Stomach (tissue), 19 donors: ENCODE measurements at regions of chr13 and their contacts with region 1.

Region 1: GRCh38 chr13:77779552-77780272 is 82.2 kb downstream of the SLAIN1 start:
- DNase-seq: peak; percentile 41 to 88
- H3K4me3 ChIP-seq: no peak overlapping the region
- H3K27ac ChIP-seq: peak overlapping the region in 1 of 5 donors; percentile 41
- H3K4me1 ChIP-seq: peaks cover 0 to 11% (median 5%) of the 10 kb centered on the region in 4 donors
- H3K27me3 ChIP-seq: no peaks in the 10 kb centered on the region
- CTCF ChIP-seq: peak in 5 of 7 experiments; percentile 23 to 67 (median 44)
- EP300 ChIP-seq: no peak
- POLR2A ChIP-seq: no peak

Region 2: GRCh38 chr13:77599351-77599750 is 180.4 kb before region 1 on chr13:
- intact Hi-C with region 1: no loop called
- DNase-seq: peak in 1 of 2 donors; percentile 12
- H3K4me3 ChIP-seq: no peak overlapping the region
- H3K27ac ChIP-seq: no peak overlapping the region
- H3K4me1 ChIP-seq: no peaks in the 10 kb centered on the region
- H3K27me3 ChIP-seq: no peaks in the 10 kb centered on the region
- CTCF ChIP-seq: no peak
- EP300 ChIP-seq: no peak
- POLR2A ChIP-seq: no peak

Region 3: DNA sequence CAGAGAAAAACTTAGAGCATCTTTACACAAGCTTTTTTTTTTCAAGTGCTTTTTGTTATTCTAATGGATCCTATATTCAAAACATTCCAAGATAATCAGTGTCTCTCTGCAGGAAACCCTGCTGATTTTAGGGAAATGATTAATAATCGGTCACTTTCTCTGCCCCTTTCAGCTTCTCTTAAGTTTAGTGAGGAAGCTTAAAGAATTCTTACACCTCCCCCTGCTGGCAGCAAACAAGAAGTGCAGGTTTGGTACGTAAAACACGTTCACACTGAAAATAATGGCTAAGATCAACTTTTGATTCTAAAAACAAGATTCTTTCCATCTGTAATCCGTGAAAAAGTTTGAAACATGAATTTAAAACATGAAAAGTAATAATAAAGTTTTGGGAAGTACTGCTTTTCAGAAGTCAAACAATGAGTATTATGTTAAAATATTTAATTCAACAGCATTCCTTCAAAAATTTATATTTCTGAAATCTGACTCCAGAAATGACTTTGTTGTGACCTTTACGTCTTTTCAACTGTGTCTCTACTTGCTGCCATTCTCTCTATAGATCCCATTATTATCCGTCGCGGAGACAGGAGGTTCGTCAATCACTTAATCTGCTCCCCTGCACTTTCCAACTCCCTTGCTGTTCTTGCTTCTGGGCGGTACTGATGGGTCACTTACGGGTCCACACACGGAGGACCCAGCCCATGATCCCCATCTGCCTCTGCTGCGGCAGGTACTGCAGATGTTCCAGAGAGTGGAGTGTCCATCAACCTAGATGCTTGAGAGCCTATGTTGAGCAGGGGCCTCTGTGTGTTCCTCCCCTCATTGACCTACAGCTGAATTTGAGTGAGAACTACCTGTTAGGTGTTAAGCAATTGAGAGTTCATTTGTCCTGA is 342.0 kb after region 1 on chr13:
- intact Hi-C with region 1: loop called (anchors 5 kb)
- DNase-seq: peak; percentile 46 to 86
- H3K4me3 ChIP-seq: peak overlapping the region in 1 of 4 donors; percentile 22
- H3K27ac ChIP-seq: no peak overlapping the region
- H3K4me1 ChIP-seq: peaks cover 0 to 7% (median 0%) of the 10 kb centered on the region in 4 donors
- H3K27me3 ChIP-seq: peaks cover 0 to 10% (median 0%) of the 10 kb centered on the region in 3 donors
- CTCF ChIP-seq: peak in 6 of 7 experiments; percentile 29 to 85 (median 82)
- EP300 ChIP-seq: no peak
- POLR2A ChIP-seq: no peak